Endothelial cell of umbilical vein (primary cell): ENCODE measurements at regions of chr6 and their contacts with region 1.

Region 1: DNA sequence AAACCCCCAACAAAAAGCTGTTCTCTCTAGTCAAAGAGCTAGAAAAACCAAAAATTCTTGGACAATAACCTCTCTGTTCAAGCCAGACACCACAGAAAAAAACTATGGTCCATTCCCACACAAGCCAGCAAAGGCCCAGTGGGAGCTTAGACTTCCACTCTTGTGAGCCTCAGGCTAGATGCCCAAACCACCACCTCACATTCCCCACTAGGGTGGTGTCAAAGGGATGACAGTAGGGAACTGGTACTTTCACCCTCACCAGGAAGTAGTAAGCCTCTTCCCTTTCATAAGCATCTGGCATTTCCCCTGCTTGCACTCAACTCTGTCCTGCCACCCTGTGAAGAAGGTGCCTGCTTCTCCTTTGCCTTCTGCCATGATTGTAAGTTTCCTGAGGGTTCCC is 58.4 kb upstream of the RNF217 start:
- DNase-seq: no peak
- H3K4me3 ChIP-seq: no peak overlapping the region
- H3K27ac ChIP-seq: no peak overlapping the region
- H3K4me1 ChIP-seq: no peaks in the 10 kb centered on the region
- H3K27me3 ChIP-seq: no peaks in the 10 kb centered on the region
- CTCF ChIP-seq: no peak
- POLR2A ChIP-seq: no peak

Region 2: DNA sequence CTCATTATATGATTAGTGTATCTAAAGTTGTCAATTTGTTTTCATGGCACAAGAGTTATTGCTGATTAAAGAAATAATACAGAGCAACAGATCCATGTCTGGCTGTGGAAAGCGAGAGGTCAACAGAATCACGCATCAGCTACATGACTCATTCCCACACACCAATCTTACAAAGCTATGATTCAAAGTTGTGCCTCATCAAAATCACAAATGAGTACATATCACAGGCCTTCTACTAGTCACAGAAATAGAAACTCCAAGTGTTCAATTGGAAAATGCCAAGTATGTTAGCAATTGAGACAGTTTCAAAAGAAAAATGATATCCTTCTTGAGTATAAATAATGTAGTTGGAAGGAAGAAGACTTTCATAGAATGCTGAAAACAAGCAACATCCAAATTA is 1157.9 kb before region 1 on chr6:
- CTCF ChIA-PET with region 1: no interaction called
- POLR2A ChIA-PET with region 1: no interaction called
- dilution Hi-C with region 1: no loop called
- intact Hi-C with region 1: no loop called
- DNase-seq: peak; percentile 3
- H3K4me3 ChIP-seq: no peak overlapping the region
- H3K27ac ChIP-seq: no peak overlapping the region
- H3K4me1 ChIP-seq: no peaks in the 10 kb centered on the region
- H3K27me3 ChIP-seq: no peaks in the 10 kb centered on the region
- CTCF ChIP-seq: no peak
- POLR2A ChIP-seq: no peak

Region 3: GRCh38 chr6:124622351-124622750 is 281.4 kb before region 1 on chr6:
- CTCF ChIA-PET with region 1: no interaction called
- POLR2A ChIA-PET with region 1: no interaction called
- dilution Hi-C with region 1: no loop called
- intact Hi-C with region 1: no loop called
- DNase-seq: no peak
- H3K4me3 ChIP-seq: no peak overlapping the region
- H3K27ac ChIP-seq: no peak overlapping the region
- H3K4me1 ChIP-seq: no peaks in the 10 kb centered on the region
- H3K27me3 ChIP-seq: no peaks in the 10 kb centered on the region
- CTCF ChIP-seq: no peak
- POLR2A ChIP-seq: no peak

Region 4: DNA sequence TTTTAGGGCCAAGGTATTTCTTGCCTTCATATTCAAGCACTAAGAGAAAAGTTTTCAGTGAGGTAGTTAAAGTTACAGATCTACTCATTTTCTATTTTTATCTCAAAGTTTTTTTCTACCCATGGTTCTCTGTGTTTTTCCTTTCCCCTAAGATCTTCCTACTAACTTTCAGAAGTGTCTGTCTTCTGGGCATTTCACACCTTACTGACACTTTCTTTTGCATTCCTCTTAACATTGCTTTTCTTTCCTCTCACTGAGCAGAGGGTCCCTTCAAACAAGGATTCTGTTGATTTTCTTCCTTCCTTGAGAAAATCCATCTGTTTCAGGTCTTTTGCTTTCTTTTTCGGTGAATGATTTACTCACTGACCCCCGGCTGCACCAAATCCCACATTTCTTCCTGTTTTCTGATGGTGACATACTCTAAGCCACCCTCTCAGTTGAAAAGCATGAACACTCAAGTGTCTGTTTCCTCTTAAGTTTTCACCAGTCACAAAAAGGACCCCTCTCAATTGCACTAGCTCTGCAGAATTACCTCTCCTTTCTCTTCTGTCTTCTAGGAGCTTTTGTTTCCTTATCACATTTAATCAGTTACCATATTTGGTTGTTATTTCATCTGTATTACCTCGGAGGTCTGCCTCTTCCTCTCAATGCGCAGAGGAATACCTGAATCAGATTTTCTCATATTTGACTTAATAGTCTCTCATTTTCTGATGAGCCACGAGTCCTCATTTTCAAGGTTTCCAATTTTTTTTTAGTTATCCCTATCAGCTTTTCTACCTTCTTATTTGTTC is 15.0 kb before region 1 on chr6:
- CTCF ChIA-PET with region 1: no interaction called
- POLR2A ChIA-PET with region 1: no interaction called
- dilution Hi-C with region 1: no loop called
- intact Hi-C with region 1: loop called (anchors 1 kb)
- DNase-seq: no peak
- H3K4me3 ChIP-seq: no peak overlapping the region
- H3K27ac ChIP-seq: no peak overlapping the region
- H3K4me1 ChIP-seq: no peaks in the 10 kb centered on the region
- H3K27me3 ChIP-seq: no peaks in the 10 kb centered on the region
- CTCF ChIP-seq: no peak
- POLR2A ChIP-seq: no peak